ENCODE measurements at regions of chr4 and their contacts with region 1.

Region 1: GRCh38 chr4:163544407-163545038 is 50.0 kb downstream of the TMA16 start:
- DNase-seq: peak; percentile 56
- ATAC-seq: peak; percentile 79 to 87

Region 2: GRCh38 chr4:162497564-162498167 is 1046.9 kb before region 1 on chr4:
- intact Hi-C with region 1: loop called in 1 of 2 experiments (anchors 5 kb)
- DNase-seq: no peak
- ATAC-seq: peak; percentile 75 to 88

Region 3: DNA sequence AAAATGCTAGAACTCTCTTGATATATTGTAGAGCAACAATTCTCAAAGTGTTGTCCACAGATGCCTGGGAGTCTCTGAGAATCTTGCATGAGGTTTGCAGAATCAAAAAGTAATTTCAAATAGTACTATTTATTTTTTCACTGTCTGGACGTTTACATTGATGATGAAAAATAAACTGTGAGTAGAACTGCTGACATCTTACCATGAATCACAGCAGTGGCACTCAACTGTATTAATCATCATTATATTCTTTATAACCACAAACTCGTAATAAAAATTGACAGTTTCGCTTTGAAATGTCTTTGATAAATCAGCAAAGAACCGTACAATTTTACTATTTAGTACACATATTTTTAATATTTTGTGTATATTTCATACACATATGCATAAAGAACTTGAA is 472.3 kb before region 1 on chr4:
- intact Hi-C with region 1: no loop called
- DNase-seq: no peak
- ATAC-seq: no peak

Region 4: GRCh38 chr4:163484906-163485305 is 59.6 kb before region 1 on chr4:
- intact Hi-C with region 1: loop called (anchors 5 kb)
- DNase-seq: peak; percentile 40
- ATAC-seq: peak; percentile 25 to 76